Dorsolateral prefrontal cortex (tissue), 120 donors: ENCODE measurements at regions of chr7 and their contacts with region 1.

Region 1: GRCh38 chr7:85041605-85042216 is 145.1 kb downstream of the SEMA3D start:
- DNase-seq: peak; percentile 24 to 72 (median 54)
- H3K4me3 ChIP-seq: no peak overlapping the region
- H3K27ac ChIP-seq: no peak overlapping the region
- H3K27me3 ChIP-seq: peaks cover 0 to 3% (median 0%) of the 10 kb centered on the region in 45 donors
- CTCF ChIP-seq: peak; percentile 57 to 91 (median 76)

Region 2: DNA sequence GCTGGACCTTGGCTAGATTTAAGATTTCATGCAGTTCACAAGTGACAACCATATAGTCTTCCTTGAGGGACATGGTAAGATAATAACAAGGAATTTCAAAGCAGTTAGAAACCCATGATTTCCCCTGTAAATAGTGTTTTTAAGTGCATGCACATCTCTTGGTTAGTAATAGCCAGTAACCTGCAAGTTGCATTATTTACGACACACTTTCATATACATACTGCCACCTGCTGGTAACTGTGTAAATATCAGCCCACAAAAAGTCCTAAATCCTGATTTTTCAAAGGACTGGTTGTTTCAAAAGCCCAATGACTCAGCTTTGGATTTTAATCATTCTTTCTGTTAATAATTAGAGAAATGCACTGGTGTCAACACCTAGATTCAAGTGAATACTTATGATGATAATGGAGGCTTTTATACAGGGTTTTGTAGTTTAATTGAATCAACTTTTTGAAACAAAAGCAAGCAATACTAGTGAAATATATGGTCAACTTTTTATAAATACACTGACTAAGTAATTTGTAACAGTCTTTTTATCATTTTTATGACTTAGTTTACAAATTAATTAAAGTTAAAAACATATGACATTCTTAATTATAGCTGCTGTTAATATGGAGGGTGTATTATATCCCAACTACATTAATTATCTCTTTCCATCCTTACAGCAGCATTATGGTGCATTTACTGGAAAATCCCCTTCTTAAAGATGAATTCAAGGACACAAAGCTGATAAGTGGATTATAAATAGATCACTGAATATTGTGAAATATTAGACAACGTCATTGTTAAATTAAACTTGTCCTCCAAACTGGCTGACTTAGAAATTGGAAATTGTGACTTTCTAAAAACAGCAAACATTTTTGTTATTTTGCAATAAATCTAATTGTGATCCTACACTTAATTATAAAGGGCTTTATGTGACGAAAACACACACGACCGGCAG is 512.8 kb after region 1 on chr7:
- intact Hi-C with region 1: loop called (anchors 1 to 5 kb)
- DNase-seq: no peak
- H3K4me3 ChIP-seq: no peak overlapping the region
- H3K27ac ChIP-seq: no peak overlapping the region
- H3K27me3 ChIP-seq: no peaks in the 10 kb centered on the region
- CTCF ChIP-seq: peak; percentile 59 to 91 (median 80)

Region 3: GRCh38 chr7:85750454-85750949 is 708.8 kb after region 1 on chr7:
- intact Hi-C with region 1: loop called in 1 of 2 experiments (anchors 5 kb)
- DNase-seq: no peak
- H3K4me3 ChIP-seq: no peak overlapping the region
- H3K27ac ChIP-seq: no peak overlapping the region
- H3K27me3 ChIP-seq: peaks cover 0 to 8% (median 0%) of the 10 kb centered on the region in 45 donors
- CTCF ChIP-seq: peak in 49 of 56 donors; percentile 16 to 67 (median 41)